ENCODE measurements at regions of chr12 and their contacts with region 1.

Region 1: DNA sequence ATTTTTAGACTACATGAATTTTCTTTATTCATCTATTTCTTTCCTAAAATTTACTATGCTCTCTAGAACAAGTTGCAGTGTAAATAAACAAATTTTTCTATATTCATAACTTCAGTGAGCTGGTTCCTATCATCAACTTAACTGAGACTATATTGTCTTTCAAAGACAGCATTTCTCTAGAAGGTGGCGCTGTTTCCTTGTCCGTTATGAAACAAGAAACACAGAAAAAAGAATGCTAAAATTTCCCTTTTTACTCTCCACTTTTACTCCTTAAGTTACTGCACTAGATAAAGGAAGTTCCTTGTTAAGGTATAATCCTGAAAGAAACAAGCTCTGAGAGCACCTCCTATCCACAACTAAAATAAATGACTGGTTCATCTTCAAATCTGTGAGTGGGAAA is 8.2 kb upstream of the CLEC2A start:
- DNase-seq: no peak
- H3K4me3 Mint-ChIP-seq: no peak overlapping the region
- H3K27ac Mint-ChIP-seq: no peak overlapping the region
- H3K4me1 Mint-ChIP-seq: peaks cover 27% of the 10 kb centered on the region
- H3K27me3 Mint-ChIP-seq: peaks cover 12% of the 10 kb centered on the region

Region 2: DNA sequence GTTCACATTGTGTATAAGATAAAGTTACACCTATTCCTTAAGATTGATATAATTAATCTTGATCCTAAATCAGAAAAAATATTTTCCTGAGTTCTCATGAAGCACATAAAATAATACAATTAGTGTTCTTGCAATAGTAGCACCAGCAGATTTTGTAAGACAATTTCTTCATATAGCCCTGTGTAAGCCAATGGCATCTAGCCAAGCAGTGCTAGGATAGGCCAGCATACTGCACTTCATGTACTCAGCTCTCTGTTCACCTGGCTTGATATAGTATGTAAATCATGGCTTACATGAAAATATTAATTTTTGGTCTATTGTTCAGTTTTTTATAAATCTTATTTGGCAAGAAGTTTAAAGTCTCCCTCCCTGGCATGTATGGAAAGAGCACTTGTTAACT is 57.2 kb before region 1 on chr12:
- intact Hi-C with region 1: no loop called
- DNase-seq: no peak
- H3K4me3 Mint-ChIP-seq: no peak overlapping the region
- H3K27ac Mint-ChIP-seq: no peak overlapping the region
- H3K4me1 Mint-ChIP-seq: peaks cover 16% of the 10 kb centered on the region
- H3K27me3 Mint-ChIP-seq: peaks cover 9% of the 10 kb centered on the region

Region 3: DNA sequence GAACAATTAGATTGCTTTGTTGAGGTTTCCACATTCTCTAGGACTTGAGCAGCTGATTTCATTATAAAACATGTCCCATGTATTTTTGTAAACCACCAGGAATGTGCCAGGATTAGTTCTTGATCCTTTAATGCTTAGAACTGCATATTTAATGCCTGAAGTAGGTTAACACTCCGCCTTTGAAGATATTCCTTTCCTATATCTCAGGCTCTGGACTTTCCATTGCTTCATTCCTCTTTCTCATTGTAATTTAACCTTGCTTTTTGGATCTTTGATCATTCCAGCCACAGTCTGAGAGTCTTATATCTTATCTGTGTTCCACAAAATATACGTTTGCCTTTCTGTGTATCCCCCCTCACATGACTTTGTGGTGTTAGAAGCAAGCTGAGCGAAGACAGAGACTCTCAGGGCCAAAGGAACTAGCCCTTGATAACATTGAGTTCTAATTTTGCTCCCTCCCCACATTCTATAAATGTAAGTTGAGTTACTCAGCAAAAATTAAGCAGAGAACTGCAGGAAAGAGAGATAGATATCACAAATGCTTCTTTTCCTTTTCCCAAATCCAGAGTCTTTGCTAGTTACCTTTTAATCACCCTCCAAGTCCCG is 60.9 kb after region 1 on chr12:
- intact Hi-C with region 1: loop called (anchors 5 kb)
- DNase-seq: no peak
- H3K4me3 Mint-ChIP-seq: no peak overlapping the region
- H3K27ac Mint-ChIP-seq: no peak overlapping the region
- H3K4me1 Mint-ChIP-seq: no peaks in the 10 kb centered on the region
- H3K27me3 Mint-ChIP-seq: peaks cover 42% of the 10 kb centered on the region

Region 4: GRCh38 chr12:10140001-10140400 is 199.6 kb after region 1 on chr12:
- intact Hi-C with region 1: loop called (anchors 5 kb)
- DNase-seq: peak; percentile 16
- H3K4me3 Mint-ChIP-seq: no peak overlapping the region
- H3K27ac Mint-ChIP-seq: no peak overlapping the region
- H3K4me1 Mint-ChIP-seq: no peaks in the 10 kb centered on the region
- H3K27me3 Mint-ChIP-seq: peaks cover 37% of the 10 kb centered on the region

Measured in activated T-helper 2 cell treated with anti-CD3 and anti-CD28 coated beads, Interferon-gamma antibody, Interleukin-2, Interleukin-4, amounts not matched to agents 10 μg/mL and 5 μg/mL and 100 μg/mL, durations not matched to agents 14 hours and 24 hours and 36 hours (primary cell).